Natural killer cell (primary cell): ENCODE measurements at regions of chr3 and their contacts with region 1.

Region 1: GRCh38 chr3:48151058-48151806 is 37.0 kb downstream of the CDC25A start:
- DNase-seq: peak; percentile 49 to 69
- ATAC-seq: peak; percentile 80 to 98 (median 94)
- H3K4me3 ChIP-seq: no peak overlapping the region
- H3K4me3 Mint-ChIP-seq: no peak overlapping the region
- H3K27ac ChIP-seq: no peak overlapping the region
- H3K27ac Mint-ChIP-seq: no peak overlapping the region
- H3K4me1 ChIP-seq: no peaks in the 10 kb centered on the region
- H3K4me1 Mint-ChIP-seq: no peaks in the 10 kb centered on the region
- H3K27me3 ChIP-seq: no peaks in the 10 kb centered on the region
- H3K27me3 Mint-ChIP-seq: no peaks in the 10 kb centered on the region
- CTCF ChIP-seq: peak; percentile 45

Region 2: DNA sequence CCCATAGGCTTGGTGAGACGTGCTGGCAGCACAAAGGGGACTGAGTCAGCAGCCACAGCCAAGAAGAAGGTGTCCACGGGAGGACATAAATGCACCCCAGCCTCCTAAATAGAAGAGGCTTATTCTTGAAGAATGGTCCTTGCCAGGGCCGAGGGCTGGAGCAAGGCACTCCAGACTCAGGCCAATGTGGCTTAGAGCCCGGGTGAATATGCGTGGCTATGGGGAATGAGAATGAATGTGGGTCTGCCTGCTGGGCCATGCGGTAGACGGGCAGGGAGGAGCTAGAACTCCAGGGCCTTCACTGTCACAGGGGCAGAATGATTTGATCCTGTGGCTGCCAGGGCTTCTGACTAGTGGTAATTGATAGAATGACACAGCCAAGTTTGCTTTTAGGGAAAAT is 314.2 kb before region 1 on chr3:
- intact Hi-C with region 1: loop called (anchors 5 kb)
- DNase-seq: no peak
- ATAC-seq: no peak
- H3K4me3 ChIP-seq: no peak overlapping the region
- H3K4me3 Mint-ChIP-seq: no peak overlapping the region
- H3K27ac ChIP-seq: no peak overlapping the region
- H3K27ac Mint-ChIP-seq: peak overlapping the region; percentile 43 to 61
- H3K4me1 ChIP-seq: no peaks in the 10 kb centered on the region
- H3K4me1 Mint-ChIP-seq: peaks cover 0 to 6% of the 10 kb centered on the region in 2 donors
- H3K27me3 ChIP-seq: no peaks in the 10 kb centered on the region
- H3K27me3 Mint-ChIP-seq: no peaks in the 10 kb centered on the region
- CTCF ChIP-seq: no peak

Region 3: DNA sequence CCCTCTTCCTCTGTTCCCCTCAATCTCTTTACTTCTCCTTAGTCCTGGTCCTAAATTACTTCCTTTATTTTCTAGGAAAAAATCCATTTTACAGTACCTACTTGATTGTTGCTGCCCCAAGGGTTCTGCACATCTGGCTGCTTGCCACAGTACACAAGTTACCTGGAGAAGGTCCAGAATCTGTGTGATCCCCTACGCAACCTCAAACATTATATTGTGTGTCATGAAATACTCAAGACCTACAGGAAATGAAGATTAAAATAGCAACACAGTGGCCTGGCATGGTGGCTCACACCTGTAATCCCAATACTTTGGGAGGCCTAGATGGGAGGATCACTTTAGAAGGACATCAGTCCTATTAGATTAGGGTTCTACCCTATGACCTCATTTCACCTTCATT is 647.8 kb after region 1 on chr3:
- intact Hi-C with region 1: no loop called
- DNase-seq: no peak
- ATAC-seq: no peak
- H3K4me3 ChIP-seq: no peak overlapping the region
- H3K4me3 Mint-ChIP-seq: no peak overlapping the region
- H3K27ac ChIP-seq: no peak overlapping the region
- H3K27ac Mint-ChIP-seq: no peak overlapping the region
- H3K4me1 ChIP-seq: no peaks in the 10 kb centered on the region
- H3K4me1 Mint-ChIP-seq: peaks cover 4 to 9% of the 10 kb centered on the region in 2 donors
- H3K27me3 ChIP-seq: no peaks in the 10 kb centered on the region
- H3K27me3 Mint-ChIP-seq: no peaks in the 10 kb centered on the region
- CTCF ChIP-seq: no peak